Endothelial cell of umbilical vein (primary cell): ENCODE measurements at regions of chr3 and their contacts with region 1.

Region 1: DNA sequence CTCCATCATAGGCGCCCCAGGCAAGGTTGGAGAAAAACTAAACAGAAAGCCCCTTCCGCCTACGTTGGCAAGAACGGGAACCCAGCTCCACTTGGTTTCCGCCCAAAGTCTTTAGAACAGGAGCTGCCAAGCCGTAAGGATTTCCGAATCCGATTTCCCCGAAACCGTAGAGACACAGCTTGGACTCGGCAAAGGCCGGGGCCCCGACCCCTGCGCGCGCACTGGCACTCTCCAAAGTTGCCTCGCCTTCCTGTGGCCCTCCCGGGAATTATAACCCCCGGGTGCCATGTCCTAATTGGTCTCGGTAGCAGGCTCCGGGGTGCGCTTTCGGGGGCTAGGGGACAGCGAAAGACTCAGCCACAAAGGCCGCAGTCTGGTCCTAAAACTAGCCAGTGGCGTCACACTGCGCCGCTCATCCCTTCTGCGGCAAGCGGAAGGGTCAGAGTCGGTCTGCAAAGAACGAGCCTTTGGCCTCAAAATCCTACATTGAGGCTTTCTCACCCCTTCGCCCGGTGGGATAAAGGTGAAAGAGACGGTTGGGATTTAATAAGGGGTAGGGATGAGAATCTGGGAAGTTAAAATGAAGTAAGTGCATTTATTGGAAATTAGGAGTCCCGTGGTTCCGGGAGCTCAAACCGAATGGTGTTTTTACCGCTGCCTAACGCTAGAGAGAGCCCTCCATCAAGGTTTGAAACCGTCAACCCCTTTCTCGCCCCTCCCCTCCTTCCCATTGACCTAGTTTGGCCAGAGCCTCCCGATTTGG is 6.8 kb downstream of the BCL6 start:
- DNase-seq: peak; percentile 87
- H3K4me3 ChIP-seq: peak overlapping the region; percentile 47 to 82 (median 58)
- H3K27ac ChIP-seq: peak overlapping the region; percentile 94
- H3K4me1 ChIP-seq: peaks cover 46% of the 10 kb centered on the region
- H3K27me3 ChIP-seq: no peaks in the 10 kb centered on the region
- CTCF ChIP-seq: peak; percentile 79 to 83
- POLR2A ChIP-seq: no peak

Region 2: DNA sequence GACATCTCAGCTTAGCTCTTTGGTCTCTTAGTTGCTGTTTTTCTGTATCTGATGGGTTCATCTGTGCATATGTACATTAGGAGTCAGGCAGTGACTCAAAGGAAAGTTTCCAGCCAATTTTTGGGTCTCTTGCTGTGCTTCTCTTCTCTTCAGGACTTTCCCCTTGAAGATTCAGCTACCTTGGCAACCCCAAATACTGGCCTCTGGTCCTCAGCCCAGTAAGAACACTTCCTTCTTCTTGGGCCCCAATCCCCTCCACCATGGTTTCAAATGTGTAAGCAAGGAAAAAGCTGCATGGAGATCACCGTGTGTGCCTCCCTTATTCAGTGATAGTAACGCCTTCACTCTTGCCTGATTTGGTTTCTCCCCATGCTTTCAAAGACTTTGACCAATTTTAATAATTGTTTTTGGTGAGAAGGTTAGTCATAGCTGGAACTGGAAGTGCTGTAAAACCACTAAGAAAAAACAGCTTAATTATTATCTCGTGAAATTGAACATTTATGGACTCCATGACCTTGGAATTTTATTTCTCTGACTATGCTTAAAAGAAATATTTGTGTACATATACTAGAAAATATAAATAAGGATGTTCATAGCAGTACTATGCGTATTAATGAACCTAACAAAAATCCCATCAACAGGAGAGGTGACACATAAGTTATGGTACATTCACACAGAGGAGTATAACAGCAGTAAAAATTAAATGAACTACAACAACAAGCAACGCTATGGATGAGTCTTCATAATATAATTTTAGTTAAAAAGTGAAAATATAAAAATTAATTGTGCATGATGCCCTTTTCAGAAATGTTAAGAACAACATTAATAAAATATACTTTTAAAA is 132.1 kb after region 1 on chr3:
- CTCF ChIA-PET with region 1: no interaction called
- POLR2A ChIA-PET with region 1: no interaction called
- dilution Hi-C with region 1: no loop called
- intact Hi-C with region 1: no loop called
- DNase-seq: no peak
- H3K4me3 ChIP-seq: no peak overlapping the region
- H3K27ac ChIP-seq: no peak overlapping the region
- H3K4me1 ChIP-seq: no peaks in the 10 kb centered on the region
- H3K27me3 ChIP-seq: no peaks in the 10 kb centered on the region
- CTCF ChIP-seq: no peak
- POLR2A ChIP-seq: no peak

Region 3: GRCh38 chr3:188294823-188295487 is 556.4 kb after region 1 on chr3:
- CTCF ChIA-PET with region 1: interaction called, 10 read pairs
- POLR2A ChIA-PET with region 1: no interaction called
- dilution Hi-C with region 1: no loop called
- intact Hi-C with region 1: no loop called
- DNase-seq: peak; percentile 95
- H3K4me3 ChIP-seq: no peak overlapping the region
- H3K27ac ChIP-seq: peak overlapping the region; percentile 63
- H3K4me1 ChIP-seq: peaks cover 49% of the 10 kb centered on the region
- H3K27me3 ChIP-seq: no peaks in the 10 kb centered on the region
- CTCF ChIP-seq: no peak
- POLR2A ChIP-seq: no peak

Region 4: GRCh38 chr3:188584162-188584529 is 845.6 kb after region 1 on chr3:
- CTCF ChIA-PET with region 1: interaction called, 11 read pairs
- POLR2A ChIA-PET with region 1: no interaction called
- dilution Hi-C with region 1: no loop called
- intact Hi-C with region 1: no loop called
- DNase-seq: peak; percentile 78
- H3K4me3 ChIP-seq: peak overlapping the region in 2 of 3 experiments; percentile 15 to 41
- H3K27ac ChIP-seq: peak overlapping the region; percentile 79
- H3K4me1 ChIP-seq: peaks cover 20% of the 10 kb centered on the region
- H3K27me3 ChIP-seq: no peaks in the 10 kb centered on the region
- CTCF ChIP-seq: no peak
- POLR2A ChIP-seq: no peak

Region 5: GRCh38 chr3:188788621-188789081 is 1050.1 kb after region 1 on chr3:
- CTCF ChIA-PET with region 1: interaction called, 4 read pairs
- POLR2A ChIA-PET with region 1: no interaction called
- dilution Hi-C with region 1: no loop called
- intact Hi-C with region 1: loop called (anchors 1 kb)
- DNase-seq: peak; percentile 90
- H3K4me3 ChIP-seq: no peak overlapping the region
- H3K27ac ChIP-seq: peak overlapping the region; percentile 85
- H3K4me1 ChIP-seq: peaks cover 19% of the 10 kb centered on the region
- H3K27me3 ChIP-seq: no peaks in the 10 kb centered on the region
- CTCF ChIP-seq: no peak
- POLR2A ChIP-seq: no peak

Region 6: DNA sequence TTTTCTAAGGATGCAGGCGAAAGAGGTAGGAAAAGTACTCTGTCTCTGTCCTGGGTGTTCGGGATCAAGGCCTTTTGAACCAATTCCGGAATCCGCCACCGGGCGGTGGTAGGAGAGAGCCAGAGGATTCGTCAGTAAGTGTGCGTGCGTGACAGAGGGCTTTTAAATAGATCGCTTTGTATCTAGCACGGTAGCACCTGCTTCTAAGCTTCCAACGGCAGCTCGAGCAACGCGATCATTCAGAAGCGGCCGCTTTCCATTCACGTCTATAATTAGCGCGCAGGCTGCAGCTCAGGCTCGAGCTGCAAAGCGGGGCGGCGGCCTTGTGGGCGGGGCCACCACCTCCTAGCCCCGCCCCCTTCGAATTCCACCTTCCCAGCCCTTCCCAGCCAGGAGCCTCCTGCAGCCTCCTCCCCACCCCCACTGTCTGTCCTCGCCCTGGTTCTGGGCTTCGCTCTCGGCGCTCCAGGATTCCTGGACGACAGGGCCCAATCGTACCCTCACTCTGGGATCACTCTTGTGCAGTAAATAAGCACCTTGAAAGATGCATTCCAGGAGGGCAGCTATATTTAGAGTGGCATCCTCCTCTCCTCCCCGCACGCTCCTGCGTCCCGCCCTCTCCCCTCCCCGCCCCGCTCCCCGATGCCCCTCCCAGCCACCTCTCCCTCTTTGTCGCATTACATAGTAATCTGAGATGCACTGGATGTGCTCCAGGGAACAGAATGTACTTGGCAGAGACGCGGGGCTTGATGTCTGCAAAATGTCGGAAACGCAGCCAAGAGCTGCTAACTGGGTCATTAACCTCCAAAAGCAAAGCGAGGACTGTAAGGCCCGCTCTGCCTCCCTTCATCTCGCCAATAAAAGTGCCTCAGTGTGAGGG is 1209.1 kb after region 1 on chr3:
- CTCF ChIA-PET with region 1: interaction called, 466 read pairs
- POLR2A ChIA-PET with region 1: interaction called, 8 read pairs
- dilution Hi-C with region 1: loop called (anchors 5 kb)
- intact Hi-C with region 1: no loop called
- DNase-seq: peak; percentile 84
- H3K4me3 ChIP-seq: peak overlapping the region in 2 of 3 experiments; percentile 27 to 32
- H3K27ac ChIP-seq: peak overlapping the region; percentile 97
- H3K4me1 ChIP-seq: peaks cover 45% of the 10 kb centered on the region
- H3K27me3 ChIP-seq: no peaks in the 10 kb centered on the region
- CTCF ChIP-seq: peak; percentile 19 to 29
- POLR2A ChIP-seq: no peak

Region 7: GRCh38 chr3:189049438-189050236 is 1311.1 kb after region 1 on chr3:
- CTCF ChIA-PET with region 1: interaction called, 25 read pairs
- POLR2A ChIA-PET with region 1: no interaction called
- dilution Hi-C with region 1: no loop called
- intact Hi-C with region 1: loop called (anchors 2 kb)
- DNase-seq: no peak
- H3K4me3 ChIP-seq: no peak overlapping the region
- H3K27ac ChIP-seq: no peak overlapping the region
- H3K4me1 ChIP-seq: no peaks in the 10 kb centered on the region
- H3K27me3 ChIP-seq: peaks cover 0 to 2% of the 10 kb centered on the region in 2 experiments
- CTCF ChIP-seq: no peak
- POLR2A ChIP-seq: no peak